Testis (tissue), 5 donors: ENCODE measurements at regions of chr14 and their contacts with region 1.

Region 1: DNA sequence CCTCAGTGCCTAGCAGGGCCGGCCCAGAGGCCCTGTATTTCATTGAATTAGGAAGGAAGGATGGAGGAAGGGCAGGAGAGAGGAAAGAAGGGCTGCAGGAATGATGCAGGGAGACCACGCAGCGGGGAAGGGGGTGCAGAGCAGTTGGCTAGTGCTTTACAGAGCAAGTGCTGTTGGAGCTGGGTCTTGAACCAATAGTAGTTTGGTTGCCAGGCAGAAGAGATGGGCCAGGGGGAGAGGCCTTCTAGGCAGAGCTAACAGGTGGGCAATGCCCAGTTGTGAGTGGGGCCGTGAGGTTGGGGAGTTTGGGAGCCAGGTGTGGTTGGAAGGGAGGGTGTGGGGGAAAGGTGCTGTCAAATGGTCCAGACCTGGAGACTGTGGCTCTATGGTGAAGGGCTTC is 39.1 kb upstream of the SRSF5 start:
- DNase-seq: no peak
- H3K4me3 ChIP-seq: no peak overlapping the region
- H3K27ac ChIP-seq: no peak overlapping the region
- H3K4me1 ChIP-seq: peaks cover 6% of the 10 kb centered on the region
- H3K27me3 ChIP-seq: no peaks in the 10 kb centered on the region
- CTCF ChIP-seq: no peak
- POLR2A ChIP-seq: no peak

Region 2: DNA sequence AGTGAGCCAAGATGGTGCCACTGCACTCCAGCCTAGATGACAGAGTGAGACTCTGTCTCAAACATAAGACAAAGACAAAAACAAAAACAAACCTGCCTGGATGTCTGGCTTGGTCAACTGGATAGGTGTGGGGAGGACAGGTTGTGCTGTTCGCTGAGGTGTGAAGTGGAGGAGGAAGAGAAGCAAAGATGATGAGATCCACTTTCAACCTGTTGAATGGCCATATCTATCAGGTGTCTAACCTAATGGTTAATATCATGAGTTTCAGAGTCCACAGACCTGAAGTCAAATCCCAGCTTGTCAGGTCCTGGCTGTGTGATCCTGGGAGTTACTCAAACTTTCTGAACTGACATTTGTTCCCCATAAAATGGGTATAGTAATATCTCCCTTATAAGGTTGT is 143.5 kb before region 1 on chr14:
- intact Hi-C with region 1: loop called (anchors 2 kb)
- DNase-seq: no peak
- H3K4me3 ChIP-seq: no peak overlapping the region
- H3K27ac ChIP-seq: no peak overlapping the region
- H3K4me1 ChIP-seq: no peaks in the 10 kb centered on the region
- H3K27me3 ChIP-seq: no peaks in the 10 kb centered on the region
- CTCF ChIP-seq: no peak
- POLR2A ChIP-seq: no peak